Activated T-helper 2 cell treated with anti-CD3 and anti-CD28 coated beads, Interferon-gamma antibody, Interleukin-2, Interleukin-4, amounts not matched to agents 10 μg/mL and 5 μg/mL and 100 μg/mL, durations not matched to agents 14 hours and 24 hours and 36 hours (primary cell): ENCODE measurements at regions of chr11 and their contacts with region 1.

Region 1: GRCh38 chr11:35082321-35083182 is 56.4 kb upstream of the CD44 start:
- DNase-seq: peak; percentile 83
- H3K4me3 Mint-ChIP-seq: peak overlapping the region; percentile 33
- H3K27ac Mint-ChIP-seq: peak overlapping the region; percentile 55
- H3K4me1 Mint-ChIP-seq: peaks cover 81% of the 10 kb centered on the region
- H3K27me3 Mint-ChIP-seq: no peaks in the 10 kb centered on the region

Region 2: GRCh38 chr11:33670250-33671011 is 1412.1 kb before region 1 on chr11:
- intact Hi-C with region 1: no loop called
- DNase-seq: no peak
- H3K4me3 Mint-ChIP-seq: no peak overlapping the region
- H3K27ac Mint-ChIP-seq: peak overlapping the region; percentile 40
- H3K4me1 Mint-ChIP-seq: peaks cover 16% of the 10 kb centered on the region
- H3K27me3 Mint-ChIP-seq: no peaks in the 10 kb centered on the region

Region 3: DNA sequence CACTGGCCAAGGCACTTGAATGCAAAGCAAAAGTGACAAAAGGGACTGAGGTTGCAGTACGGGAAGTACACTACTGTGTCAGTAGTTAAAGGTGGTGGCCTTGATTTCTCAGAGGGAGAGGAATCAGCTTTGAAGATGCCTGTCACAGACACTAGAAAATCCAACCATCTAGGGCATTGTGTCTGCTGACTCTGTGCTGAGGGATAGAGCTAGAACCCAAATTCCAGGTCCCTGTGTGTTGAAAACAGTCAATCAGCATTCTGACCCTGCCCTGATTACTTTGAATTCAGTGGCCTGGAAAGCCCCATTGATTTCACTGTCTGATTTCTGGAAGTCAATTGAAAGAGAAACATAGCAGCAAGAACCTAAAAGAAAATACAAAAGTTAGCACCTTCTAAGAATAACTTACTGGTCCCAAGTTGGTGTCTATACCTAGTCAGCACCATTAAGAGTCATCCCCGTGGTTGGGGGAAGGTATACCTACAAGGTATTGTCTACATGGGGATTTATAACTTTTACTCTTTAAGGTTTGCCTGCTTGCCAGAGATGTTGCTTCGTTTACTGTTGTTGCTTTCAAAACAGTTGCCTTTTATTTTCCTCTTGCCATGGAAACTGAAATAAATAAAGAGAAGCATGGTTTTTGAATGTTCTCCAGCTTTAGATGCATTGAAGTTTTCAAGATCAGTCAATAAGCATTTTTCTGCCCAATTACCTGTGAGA is 68.9 kb before region 1 on chr11:
- intact Hi-C with region 1: loop called (anchors 1 kb)
- DNase-seq: peak; percentile 24
- H3K4me3 Mint-ChIP-seq: no peak overlapping the region
- H3K27ac Mint-ChIP-seq: peak overlapping the region; percentile 72
- H3K4me1 Mint-ChIP-seq: peaks cover 54% of the 10 kb centered on the region
- H3K27me3 Mint-ChIP-seq: peaks cover 20% of the 10 kb centered on the region

Region 4: DNA sequence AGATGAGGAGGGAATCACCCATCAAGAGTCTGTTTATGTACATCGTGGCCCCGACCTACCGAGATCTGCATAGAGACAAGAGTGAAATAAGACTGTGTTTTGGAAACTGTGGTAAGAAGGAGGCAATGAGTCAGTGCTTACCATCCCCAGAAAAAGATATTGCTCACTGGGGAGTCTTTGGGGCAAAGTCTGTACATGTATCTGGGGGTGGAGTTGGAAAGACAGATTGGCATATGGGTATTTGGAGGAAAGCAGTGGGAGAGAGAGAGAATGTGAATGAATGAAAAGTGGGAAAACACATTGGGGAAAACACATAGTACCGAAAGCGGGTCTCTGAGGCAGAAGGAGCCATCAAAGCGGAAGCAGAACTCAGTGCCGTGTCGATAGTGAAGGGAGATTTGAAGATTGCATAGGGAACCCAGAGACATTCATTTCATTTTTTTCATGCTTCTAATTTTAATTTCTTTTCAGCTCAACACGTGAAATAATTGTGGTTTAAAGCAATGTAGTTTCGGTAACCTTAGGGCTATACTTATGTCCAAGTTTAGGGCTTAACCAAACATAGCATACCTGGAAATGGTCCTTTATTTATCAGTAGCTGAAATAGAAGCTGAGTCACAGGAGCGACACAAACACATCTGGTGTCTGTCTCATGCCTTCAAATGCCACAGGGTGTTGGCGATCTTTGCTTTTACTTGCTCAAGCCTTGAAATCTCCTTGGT is 42.2 kb before region 1 on chr11:
- intact Hi-C with region 1: loop called (anchors 1 kb)
- DNase-seq: peak; percentile 69
- H3K4me3 Mint-ChIP-seq: peak overlapping the region; percentile 73
- H3K27ac Mint-ChIP-seq: peak overlapping the region; percentile 91
- H3K4me1 Mint-ChIP-seq: peaks cover 58% of the 10 kb centered on the region
- H3K27me3 Mint-ChIP-seq: peaks cover 20% of the 10 kb centered on the region

Region 5: DNA sequence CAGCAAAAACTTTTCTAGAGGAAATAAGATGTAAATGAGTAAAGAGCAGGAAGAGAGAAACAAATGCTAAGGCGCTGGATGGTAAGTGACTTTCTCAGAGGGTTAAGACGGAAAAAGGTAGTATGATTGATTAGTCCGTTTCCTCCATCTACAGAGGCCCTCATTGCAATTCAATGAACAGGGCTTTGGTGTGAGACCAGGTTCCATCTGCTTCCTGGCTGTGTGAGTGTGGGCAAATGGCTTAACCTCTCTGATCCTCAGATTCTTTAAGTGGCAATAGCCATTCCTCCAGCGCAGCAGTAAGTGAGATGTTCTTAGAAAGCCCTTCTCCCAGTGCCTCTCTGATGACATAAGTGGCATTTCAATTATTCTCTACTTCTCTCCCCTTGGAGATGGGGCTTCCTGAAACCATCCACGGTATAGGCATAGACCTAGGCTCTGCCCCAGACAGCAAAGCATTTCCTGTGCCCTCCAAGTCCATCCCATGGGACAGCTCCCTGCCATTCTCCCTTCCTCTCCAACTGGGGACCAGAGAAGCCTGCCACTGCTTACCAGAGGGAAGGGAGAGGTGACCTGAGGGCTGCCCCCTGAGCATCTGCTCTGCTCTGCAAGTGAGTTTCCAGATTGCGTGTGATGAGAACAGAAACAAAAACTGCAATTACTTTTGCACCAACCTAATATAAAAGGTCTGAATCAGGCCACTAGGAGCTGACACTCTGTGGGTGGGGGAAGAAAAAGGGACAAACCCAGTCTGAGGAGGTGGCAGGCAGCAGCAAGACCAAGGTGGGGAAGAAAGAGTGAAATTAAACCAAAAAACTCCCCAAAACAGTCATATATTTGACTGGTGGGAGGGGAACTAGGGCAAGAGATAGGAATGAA is 43.7 kb after region 1 on chr11:
- intact Hi-C with region 1: loop called (anchors 1 kb)
- DNase-seq: no peak
- H3K4me3 Mint-ChIP-seq: peak overlapping the region; percentile 57
- H3K27ac Mint-ChIP-seq: peak overlapping the region; percentile 79
- H3K4me1 Mint-ChIP-seq: peaks cover 56% of the 10 kb centered on the region
- H3K27me3 Mint-ChIP-seq: peaks cover 7% of the 10 kb centered on the region

Region 6: DNA sequence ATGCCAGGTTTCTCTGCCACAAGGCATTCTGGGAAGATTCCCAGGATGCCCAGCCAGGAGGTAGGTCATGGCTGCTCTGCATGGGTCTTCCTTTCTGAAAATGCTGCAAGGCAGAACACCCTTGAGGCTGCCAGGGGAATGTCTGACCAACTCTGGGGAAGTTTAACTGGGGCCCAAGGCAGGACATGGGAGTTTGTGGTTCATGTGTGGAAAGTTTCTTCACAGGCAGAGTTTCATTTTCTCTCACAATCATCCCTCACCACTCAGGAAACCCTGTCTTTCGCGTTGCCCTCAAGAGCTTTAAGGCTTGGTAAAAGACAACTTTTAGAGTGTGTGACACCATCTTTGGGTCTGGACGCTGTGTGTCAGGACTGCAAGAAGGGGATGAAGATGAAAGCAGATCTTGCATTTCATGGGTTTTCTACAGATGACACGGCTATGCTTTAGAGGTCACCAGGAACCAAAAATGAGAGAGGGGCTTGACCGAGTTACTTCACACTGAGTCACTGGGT is 189.9 kb after region 1 on chr11:
- intact Hi-C with region 1: loop called (anchors 5 kb)
- DNase-seq: peak; percentile 36
- H3K4me3 Mint-ChIP-seq: peak overlapping the region; percentile 23
- H3K27ac Mint-ChIP-seq: peak overlapping the region; percentile 79
- H3K4me1 Mint-ChIP-seq: peaks cover 57% of the 10 kb centered on the region
- H3K27me3 Mint-ChIP-seq: peaks cover 18% of the 10 kb centered on the region